ENCODE measurements at regions of chr5 and their contacts with region 1.

Region 1: DNA sequence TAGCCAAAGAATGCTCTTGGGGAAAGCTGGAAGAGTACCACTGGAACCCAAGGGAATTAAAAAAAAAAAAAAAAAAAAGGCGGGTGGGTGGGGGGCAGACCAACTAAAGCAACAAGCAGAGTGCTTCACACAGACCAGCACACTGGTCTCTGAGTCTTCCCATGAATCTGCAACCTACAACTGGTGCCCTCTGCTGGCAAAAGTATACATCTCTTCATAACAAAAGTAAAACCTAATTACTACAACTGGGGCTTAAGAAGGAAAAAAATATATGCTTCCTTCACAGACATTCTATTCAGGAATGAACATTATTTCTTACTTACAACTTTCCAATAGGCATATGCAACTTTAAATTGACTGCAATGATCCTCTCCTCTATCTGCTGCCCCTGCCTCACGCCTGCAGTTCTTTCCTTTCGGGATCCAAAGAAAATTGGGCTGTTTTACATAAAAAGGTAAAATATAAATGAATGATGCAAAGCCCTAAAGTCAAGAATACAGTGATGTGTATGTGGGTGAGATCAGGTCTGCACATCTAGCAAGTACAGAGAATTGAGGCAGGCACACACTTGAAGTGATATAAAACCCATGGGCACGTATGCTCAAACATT is 7.2 kb upstream of the KLHL3 start:
- DNase-seq: peak in 13 of 14 experiments; percentile 23 to 86 (median 52)
- ATAC-seq: peak; percentile 91
- H3K4me3 ChIP-seq: no peak overlapping the region
- H3K4me3 Mint-ChIP-seq: no peak overlapping the region
- H3K27ac ChIP-seq: no peak overlapping the region
- H3K27ac Mint-ChIP-seq: no peak overlapping the region
- H3K4me1 ChIP-seq: peaks cover 5% of the 10 kb centered on the region
- H3K4me1 Mint-ChIP-seq: peaks cover 20% of the 10 kb centered on the region
- H3K27me3 ChIP-seq: no peaks in the 10 kb centered on the region
- H3K27me3 Mint-ChIP-seq: no peaks in the 10 kb centered on the region
- CTCF ChIP-seq: peak; percentile 78

Region 2: DNA sequence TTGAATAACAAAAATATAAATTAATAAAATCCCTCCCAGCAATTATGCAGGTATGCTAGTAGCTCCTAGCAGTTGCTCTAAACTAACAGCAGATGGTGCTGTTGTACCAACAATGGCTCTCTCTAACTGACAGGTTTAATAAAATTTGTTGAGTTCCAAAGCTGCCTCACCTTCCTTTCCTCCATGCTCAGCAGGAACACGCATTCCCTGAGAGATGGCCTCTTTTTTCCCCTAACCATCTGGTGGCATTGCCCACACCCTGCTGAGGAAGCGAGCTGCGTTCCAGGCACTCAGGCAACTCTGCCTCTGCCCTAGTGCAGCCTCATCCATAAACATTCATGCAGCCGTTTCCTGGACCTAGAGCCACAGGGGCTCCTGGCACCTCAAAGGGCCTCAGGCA is 113.5 kb before region 1 on chr5:
- CTCF ChIA-PET with region 1: interaction called, 20 read pairs
- POLR2A ChIA-PET with region 1: interaction called, 5 read pairs
- intact Hi-C with region 1: loop called (anchors 1 kb)
- DNase-seq: peak in 5 of 14 experiments; percentile 7 to 75 (median 58)
- ATAC-seq: peak; percentile 61
- H3K4me3 ChIP-seq: no peak overlapping the region
- H3K4me3 Mint-ChIP-seq: no peak overlapping the region
- H3K27ac ChIP-seq: no peak overlapping the region
- H3K27ac Mint-ChIP-seq: no peak overlapping the region
- H3K4me1 ChIP-seq: no peaks in the 10 kb centered on the region
- H3K4me1 Mint-ChIP-seq: no peaks in the 10 kb centered on the region
- H3K27me3 ChIP-seq: no peaks in the 10 kb centered on the region
- H3K27me3 Mint-ChIP-seq: no peaks in the 10 kb centered on the region
- CTCF ChIP-seq: peak; percentile 88

Region 3: GRCh38 chr5:137695651-137696428 is 47.3 kb before region 1 on chr5:
- CTCF ChIA-PET with region 1: interaction called, 7 read pairs
- POLR2A ChIA-PET with region 1: interaction called, 9 read pairs
- intact Hi-C with region 1: loop called in 1 of 2 experiments (anchors 2 kb)
- DNase-seq: peak in 12 of 14 experiments; percentile 9 to 70 (median 34)
- ATAC-seq: peak; percentile 90
- H3K4me3 ChIP-seq: peak overlapping the region; percentile 11
- H3K4me3 Mint-ChIP-seq: peak overlapping the region; percentile 84
- H3K27ac ChIP-seq: peak overlapping the region; percentile 63 to 65
- H3K27ac Mint-ChIP-seq: peak overlapping the region; percentile 88
- H3K4me1 ChIP-seq: peaks cover 50% of the 10 kb centered on the region
- H3K4me1 Mint-ChIP-seq: peaks cover 71% of the 10 kb centered on the region
- H3K27me3 ChIP-seq: no peaks in the 10 kb centered on the region
- H3K27me3 Mint-ChIP-seq: no peaks in the 10 kb centered on the region
- CTCF ChIP-seq: peak; percentile 54

Measured in CD4-positive, alpha-beta T cell (primary cell).